Uterus (tissue), 4 donors: ENCODE measurements at regions of chr7 and their contacts with region 1.

Region 1: GRCh38 chr7:94295850-94296249 is 98.8 kb upstream of the COL1A2 start:
- DNase-seq: peak; percentile 19 to 27
- H3K4me3 ChIP-seq: peak overlapping the region in 1 of 2 donors; percentile 16
- H3K27ac ChIP-seq: peak overlapping the region; percentile 84 to 96
- H3K4me1 ChIP-seq: peaks cover 0 to 14% of the 10 kb centered on the region in 2 donors
- H3K27me3 ChIP-seq: no peaks in the 10 kb centered on the region
- CTCF ChIP-seq: peak; percentile 66 to 85 (median 74)
- POLR2A ChIP-seq: no peak

Region 2: DNA sequence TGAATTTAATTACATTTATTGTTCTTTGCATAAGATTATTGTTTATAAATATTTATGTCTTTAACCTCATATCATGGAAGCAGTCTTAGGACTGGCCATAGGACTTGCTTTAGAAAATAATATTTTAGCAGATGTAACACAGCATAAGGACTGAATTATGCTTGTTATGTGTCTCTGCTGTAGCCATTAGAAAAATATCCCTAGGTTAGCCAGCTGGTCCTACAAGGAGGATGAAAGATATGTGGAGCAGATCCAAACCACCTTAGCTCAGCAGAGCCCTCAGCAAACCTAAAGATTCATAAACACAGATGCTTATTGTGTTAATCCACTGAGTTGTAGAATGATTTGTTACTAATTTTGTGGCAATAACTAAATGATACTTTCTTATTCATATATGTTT is 67.2 kb before region 1 on chr7:
- intact Hi-C with region 1: no loop called
- DNase-seq: no peak
- H3K4me3 ChIP-seq: no peak overlapping the region
- H3K27ac ChIP-seq: no peak overlapping the region
- H3K4me1 ChIP-seq: no peaks in the 10 kb centered on the region
- H3K27me3 ChIP-seq: no peaks in the 10 kb centered on the region
- CTCF ChIP-seq: no peak
- POLR2A ChIP-seq: no peak

Region 3: GRCh38 chr7:94395141-94396036 is 99.5 kb after region 1 on chr7:
- intact Hi-C with region 1: loop called (anchors 5 kb)
- DNase-seq: peak; percentile 60 to 85
- H3K4me3 ChIP-seq: peak overlapping the region; percentile 63 to 64
- H3K27ac ChIP-seq: peak overlapping the region; percentile 90 to 98
- H3K4me1 ChIP-seq: peaks cover 0 to 5% of the 10 kb centered on the region in 2 donors
- H3K27me3 ChIP-seq: no peaks in the 10 kb centered on the region
- CTCF ChIP-seq: peak; percentile 82 to 91 (median 90)
- POLR2A ChIP-seq: no peak

Region 4: GRCh38 chr7:94436018-94436604 is 140.3 kb after region 1 on chr7:
- intact Hi-C with region 1: loop called (anchors 5 kb)
- DNase-seq: peak; percentile 66 to 81
- H3K4me3 ChIP-seq: no peak overlapping the region
- H3K27ac ChIP-seq: no peak overlapping the region
- H3K4me1 ChIP-seq: no peaks in the 10 kb centered on the region
- H3K27me3 ChIP-seq: no peaks in the 10 kb centered on the region
- CTCF ChIP-seq: peak; percentile 74 to 80 (median 76)
- POLR2A ChIP-seq: no peak